ENCODE measurements at regions of chr2 and their contacts with region 1.

Region 1: GRCh38 chr2:26577434-26578112 is 63.6 kb downstream of the CIB4 start:
- DNase-seq: peak; percentile 48
- H3K4me3 ChIP-seq: no peak overlapping the region
- H3K27ac ChIP-seq: no peak overlapping the region
- H3K27me3 ChIP-seq: peaks cover 14% of the 10 kb centered on the region
- CTCF ChIP-seq: peak; percentile 98

Region 2: DNA sequence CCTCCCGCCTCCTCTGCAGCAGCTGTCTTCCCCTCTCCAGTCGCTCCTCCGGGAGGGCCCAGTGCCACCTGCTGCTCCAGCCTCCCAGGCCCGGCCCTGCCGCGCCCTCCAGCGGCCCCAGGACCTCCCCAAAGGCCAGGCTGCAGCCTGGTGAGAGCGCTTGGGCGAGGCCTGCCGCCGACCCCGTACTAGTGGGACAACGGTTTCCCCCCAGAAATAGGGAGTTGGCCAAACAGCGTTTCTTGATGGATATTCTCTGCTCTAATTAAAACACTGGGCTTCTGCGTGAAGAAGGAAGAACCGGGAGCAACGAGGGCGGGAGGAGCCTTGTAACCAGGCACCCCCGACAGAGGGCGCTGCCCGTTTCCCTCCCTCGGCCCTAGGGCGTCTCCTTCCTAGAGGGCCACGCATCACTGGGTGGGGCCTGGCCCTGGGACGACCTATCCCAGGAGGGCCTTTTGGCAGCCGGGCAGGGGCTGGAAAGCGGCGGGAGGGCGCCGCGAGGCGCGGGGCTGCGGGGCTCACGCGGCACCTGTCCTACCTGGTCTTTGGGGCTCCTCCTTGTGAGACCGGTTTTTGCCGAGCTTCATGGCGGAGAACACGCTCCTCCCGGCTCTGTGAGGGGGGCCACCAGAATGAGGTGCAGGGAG is 74.2 kb before region 1 on chr2:
- in situ Hi-C with region 1: no loop called
- DNase-seq: peak; percentile 23
- H3K4me3 ChIP-seq: peak overlapping the region; percentile 35
- H3K27ac ChIP-seq: no peak overlapping the region
- H3K27me3 ChIP-seq: peaks cover 9% of the 10 kb centered on the region
- CTCF ChIP-seq: peak; percentile 91

Region 3: DNA sequence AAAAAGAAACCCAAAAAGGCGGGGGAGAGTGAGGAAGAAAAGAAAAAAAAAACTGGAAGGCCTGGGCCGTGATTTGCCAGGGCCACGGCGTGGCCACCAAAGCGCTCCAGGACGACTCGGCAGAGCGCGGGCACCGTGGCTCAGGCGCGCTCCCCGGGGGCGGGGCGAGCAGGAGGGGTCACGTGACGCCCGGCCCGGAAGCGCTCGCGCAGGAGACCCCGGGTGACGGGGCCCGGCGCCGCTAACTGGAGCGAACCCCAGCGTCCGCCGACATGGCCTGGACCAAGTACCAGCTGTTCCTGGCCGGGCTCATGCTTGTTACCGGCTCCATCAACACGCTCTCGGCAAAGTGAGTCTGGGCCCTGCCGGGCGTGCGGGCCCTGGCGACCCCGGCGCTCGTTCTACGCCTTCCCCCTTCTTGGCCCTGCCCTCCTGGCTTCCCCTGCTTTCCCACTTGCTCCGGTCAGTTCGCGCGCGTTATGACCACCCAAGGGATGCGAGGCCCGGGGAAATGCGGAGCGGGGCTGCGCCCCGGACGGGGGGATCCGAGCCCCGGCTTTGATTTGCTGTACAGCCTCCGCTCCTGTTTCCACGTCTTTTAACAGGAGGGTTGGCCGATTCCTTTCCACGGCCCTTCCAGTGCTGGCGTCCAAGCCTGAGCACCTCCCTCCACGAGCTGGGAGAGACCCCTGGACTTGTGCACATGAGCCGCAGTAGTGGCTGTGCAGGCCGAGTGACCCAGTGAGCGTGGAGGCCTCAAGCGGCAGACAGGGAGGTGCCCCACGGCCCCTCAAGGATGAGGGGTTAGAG is 186.7 kb after region 1 on chr2 and contains the start of gene SLC35F6:
- in situ Hi-C with region 1: loop called (anchors 25 kb)
- DNase-seq: peak; percentile 41
- H3K4me3 ChIP-seq: peak within 1 kb of the TSS; percentile 94
- H3K27ac ChIP-seq: peak within 1 kb of the TSS; percentile 65
- H3K27me3 ChIP-seq: no peaks in the 10 kb centered on the region
- CTCF ChIP-seq: no peak